Heart left ventricle (tissue), 16 donors: ENCODE measurements at regions of chr16 and their contacts with region 1.

Region 1: DNA sequence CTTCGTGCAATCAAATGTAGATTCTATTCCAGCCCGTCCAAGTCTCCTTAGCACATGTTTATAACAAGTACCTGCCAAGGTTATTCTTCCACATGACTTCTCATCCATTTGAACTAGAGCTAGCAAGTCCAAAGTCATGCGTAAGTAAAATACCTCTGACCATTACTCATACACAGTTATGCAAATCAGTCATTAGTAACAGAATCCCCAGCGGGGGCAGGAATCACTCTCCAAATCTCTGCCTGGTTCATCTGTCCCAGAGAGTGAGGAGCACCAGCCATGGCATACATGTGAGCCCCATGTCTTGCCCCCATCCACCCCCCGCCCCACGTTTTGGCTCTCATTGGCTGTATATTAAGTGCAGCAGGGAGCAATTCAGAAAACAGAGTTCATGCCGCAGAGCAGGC is 27.7 kb downstream of the SRL start:
- DNase-seq: peak in 1 of 5 donors; percentile 62
- ATAC-seq: peak in 3 of 4 donors; percentile 14 to 32 (median 23)
- H3K4me3 ChIP-seq: no peak overlapping the region
- H3K27ac ChIP-seq: peak overlapping the region; percentile 55 to 97 (median 92)
- H3K4me1 ChIP-seq: peaks cover 3 to 93% (median 63%) of the 10 kb centered on the region in 12 donors
- H3K27me3 ChIP-seq: no peaks in the 10 kb centered on the region
- CTCF ChIP-seq: no peak
- POLR2A ChIP-seq: peak in 1 of 2 donors; percentile 43

Region 2: DNA sequence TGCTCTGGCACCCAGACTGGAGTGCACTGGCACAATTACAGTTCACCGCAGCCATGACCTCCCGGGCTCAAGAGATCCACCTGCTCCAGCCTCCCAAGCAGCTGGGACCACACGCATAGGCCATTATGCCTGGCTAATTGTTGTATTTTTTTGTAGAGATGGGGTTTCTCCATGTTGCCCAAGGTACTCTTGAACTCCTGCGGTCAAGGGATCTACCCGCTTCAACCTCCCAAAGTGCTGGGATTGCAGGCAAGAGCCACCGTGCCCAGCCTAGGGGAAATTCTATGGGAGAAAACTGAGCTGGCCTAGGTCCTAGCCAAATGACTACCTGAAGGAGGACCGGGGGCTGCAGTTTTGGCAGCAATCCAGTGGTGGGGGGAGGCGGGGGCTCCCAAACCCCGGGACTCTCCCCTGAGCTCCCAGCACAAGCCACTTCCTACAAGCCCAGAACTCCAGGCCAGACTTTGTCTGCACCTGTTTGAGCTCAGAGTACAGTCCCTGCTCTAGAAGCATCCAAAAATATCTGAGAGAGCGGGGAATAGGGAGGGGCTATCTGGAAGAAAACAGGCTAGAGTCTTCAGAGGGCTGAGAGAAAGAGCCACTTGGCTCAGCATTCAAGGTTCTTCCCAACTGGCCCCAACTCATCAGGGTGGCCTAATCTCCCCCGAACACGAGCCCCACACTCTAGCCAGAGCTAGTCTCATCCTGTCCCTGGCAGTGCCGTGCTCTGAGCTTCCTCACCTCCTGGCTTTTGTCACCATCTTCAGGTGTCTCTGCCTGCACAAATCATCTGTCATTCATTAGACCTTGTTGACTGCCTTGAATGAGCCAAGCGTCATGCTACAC is 18.5 kb after region 1 on chr16:
- intact Hi-C with region 1: loop called in 1 of 10 experiments (anchors 2 kb)
- DNase-seq: peak in 1 of 5 donors; percentile 43
- ATAC-seq: peak; percentile 61 to 73 (median 68)
- H3K4me3 ChIP-seq: peak overlapping the region in 1 of 12 donors; percentile 7
- H3K27ac ChIP-seq: peak overlapping the region; percentile 68 to 100 (median 88)
- H3K4me1 ChIP-seq: peaks cover 0 to 80% (median 34%) of the 10 kb centered on the region in 12 donors
- H3K27me3 ChIP-seq: no peaks in the 10 kb centered on the region
- CTCF ChIP-seq: no peak
- POLR2A ChIP-seq: no peak

Region 3: DNA sequence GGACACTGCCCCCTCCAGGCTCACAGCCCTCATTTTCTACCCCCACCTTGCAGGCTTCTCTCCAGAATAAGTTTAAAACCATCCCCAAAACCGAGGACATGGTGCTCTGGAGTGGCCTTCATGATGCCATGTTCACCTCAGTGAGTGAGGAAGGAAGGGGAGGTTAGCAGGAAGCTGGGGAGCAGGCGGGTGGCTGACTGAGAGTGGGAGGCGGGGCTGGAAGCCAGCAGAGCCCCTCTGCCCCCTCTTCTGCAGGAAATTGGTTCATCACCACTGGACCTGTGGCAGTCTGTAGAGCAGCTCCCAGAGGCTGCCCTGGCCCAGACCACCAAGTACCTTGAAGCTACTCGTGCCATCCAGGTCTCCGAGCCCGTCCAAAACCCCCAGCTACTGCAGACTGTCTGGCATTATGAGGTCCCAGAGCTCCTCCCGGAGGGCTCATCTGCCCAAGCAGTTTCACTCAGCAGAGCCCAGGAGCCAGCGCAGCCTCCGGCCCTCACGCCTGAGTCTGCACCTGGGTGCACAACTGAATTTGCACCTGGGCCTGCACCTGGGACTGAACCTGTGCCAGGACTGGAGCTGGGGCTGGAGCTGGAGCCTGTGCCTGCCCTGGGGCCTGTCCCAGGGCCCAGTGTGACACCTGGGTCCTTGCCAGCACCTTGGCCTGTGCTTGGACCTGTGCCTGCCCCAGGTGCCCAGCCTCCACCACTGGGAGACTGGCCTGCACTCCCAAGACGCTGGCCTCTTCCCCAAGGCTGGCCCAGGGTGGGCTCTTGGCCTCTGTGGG is 360.9 kb after region 1 on chr16:
- intact Hi-C with region 1: no loop called
- DNase-seq: no peak
- ATAC-seq: peak in 1 of 4 donors; percentile 29
- H3K4me3 ChIP-seq: no peak overlapping the region
- H3K27ac ChIP-seq: no peak overlapping the region
- H3K4me1 ChIP-seq: no peaks in the 10 kb centered on the region
- H3K27me3 ChIP-seq: no peaks in the 10 kb centered on the region
- CTCF ChIP-seq: no peak
- POLR2A ChIP-seq: no peak